Activated T-helper 1 cell treated with anti-CD3 and anti-CD28 coated beads, Interleukin-12 subunit alpha, Interleukin-12 subunit beta, Interleukin-2, Interleukin-4 antibody, amounts not matched to agents 30 ng/mL and 10 ng/mL and 1 ng/mL, durations not matched to agents 14 hours and 24 hours and 36 hours (primary cell): ENCODE measurements at regions of chr1 and their contacts with region 1.

Region 1: DNA sequence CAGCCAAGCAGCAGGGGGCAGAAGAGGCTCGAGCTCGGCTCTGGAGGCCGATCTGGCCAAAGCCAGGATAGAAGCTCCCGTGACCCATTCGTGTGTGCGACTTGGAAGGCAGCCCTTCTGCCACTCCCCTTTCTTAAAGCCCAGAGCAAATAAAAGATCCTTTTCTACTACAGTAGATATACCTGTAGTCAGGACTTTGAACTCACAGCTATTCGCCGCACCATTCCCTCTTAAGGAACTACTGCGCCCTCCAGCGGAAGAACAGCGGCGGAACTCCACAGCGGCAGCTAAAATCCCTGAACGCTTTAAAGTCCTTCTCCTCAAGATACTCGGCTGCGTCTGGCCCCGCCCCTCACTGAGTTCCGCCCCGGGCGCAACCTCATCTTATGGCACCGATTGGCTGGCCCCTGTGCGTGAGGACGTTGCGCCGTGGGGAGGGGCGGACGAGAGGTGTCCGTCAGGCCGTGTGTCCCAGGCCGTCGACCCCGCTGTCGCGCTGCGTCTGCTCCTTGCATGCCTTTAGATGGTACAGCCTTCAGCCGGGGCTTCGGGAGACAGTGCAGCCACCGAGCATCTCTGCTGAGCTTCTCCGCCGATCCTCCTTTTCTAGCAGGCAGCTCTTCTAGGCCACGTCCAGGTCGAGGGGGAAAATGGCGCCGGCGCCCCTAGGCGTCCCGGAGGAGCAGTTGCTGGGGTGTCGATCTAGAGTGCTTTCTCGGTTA is at the start of gene LRIG2:
- DNase-seq: peak; percentile 97
- H3K4me3 Mint-ChIP-seq: peak within 1 kb of the TSS; percentile 98
- H3K27ac Mint-ChIP-seq: peak within 1 kb of the TSS; percentile 86
- H3K4me1 Mint-ChIP-seq: peaks cover 25% of the 10 kb centered on the region
- H3K27me3 Mint-ChIP-seq: no peaks in the 10 kb centered on the region
- total RNA-seq, gene LRIG2: 11.2 and 12.3 TPM in 2 replicates

Region 2: GRCh38 chr1:111755331-111756123 is 1317.4 kb before region 1 on chr1 and contains the start of gene DDX20:
- intact Hi-C with region 1: loop called (anchors 2 kb)
- DNase-seq: peak; percentile 92
- H3K4me3 Mint-ChIP-seq: peak within 1 kb of the TSS; percentile 83
- H3K27ac Mint-ChIP-seq: peak within 1 kb of the TSS; percentile 97
- H3K4me1 Mint-ChIP-seq: peaks cover 35% of the 10 kb centered on the region
- H3K27me3 Mint-ChIP-seq: peaks cover 12% of the 10 kb centered on the region
- total RNA-seq, gene DDX20: 21.5 and 25.2 TPM in 2 replicates

Region 3: DNA sequence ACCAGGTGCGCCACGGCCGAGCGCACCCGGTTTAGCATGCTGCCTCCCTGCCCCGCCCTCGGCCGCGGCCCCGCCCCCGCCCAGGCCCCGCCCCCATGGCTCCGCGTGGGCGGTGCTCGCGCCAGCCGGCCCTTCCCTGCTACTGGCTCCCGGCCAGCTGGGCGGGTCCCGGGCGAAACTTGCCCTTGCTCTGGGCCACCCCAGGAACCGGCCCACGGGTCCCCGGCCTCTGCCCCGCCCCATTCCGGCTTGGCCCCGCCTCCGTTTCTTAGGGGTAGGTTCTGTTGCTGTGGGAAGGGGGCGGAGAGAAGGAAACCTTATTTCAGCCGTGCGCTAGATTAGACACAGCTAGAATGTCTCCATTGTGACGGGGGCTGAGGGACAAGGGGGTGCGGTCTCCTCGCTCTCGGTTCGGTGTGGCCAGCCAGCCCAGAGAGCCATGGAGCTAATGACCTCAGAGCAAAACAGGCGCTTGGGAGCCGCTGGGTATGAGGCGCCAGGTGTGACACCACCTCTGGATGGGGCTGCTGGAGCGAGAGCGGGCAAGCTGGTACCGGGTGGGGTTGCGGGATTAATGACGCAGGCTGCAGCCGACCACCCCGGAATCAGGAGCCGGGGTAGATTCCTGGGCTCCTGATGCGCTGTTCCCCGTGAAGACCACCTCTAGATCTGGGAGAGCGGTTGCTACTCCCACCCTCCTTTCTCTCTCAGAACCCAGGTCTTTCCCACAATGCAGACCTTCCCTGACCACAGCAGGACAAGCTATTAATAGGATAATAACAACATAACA is 357.5 kb before region 1 on chr1 and contains the start of gene PPM1J:
- intact Hi-C with region 1: loop called (anchors 2 kb)
- DNase-seq: peak; percentile 99
- H3K4me3 Mint-ChIP-seq: peak within 1 kb of the TSS; percentile 86
- H3K27ac Mint-ChIP-seq: peak within 1 kb of the TSS; percentile 27
- H3K4me1 Mint-ChIP-seq: peaks cover 41% of the 10 kb centered on the region
- H3K27me3 Mint-ChIP-seq: peaks cover 29% of the 10 kb centered on the region
- total RNA-seq, gene PPM1J: 0.60 and 1.1 TPM in 2 replicates

Region 4: GRCh38 chr1:112904071-112904830 is 168.7 kb before region 1 on chr1:
- intact Hi-C with region 1: loop called (anchors 2 kb)
- DNase-seq: peak; percentile 36
- H3K4me3 Mint-ChIP-seq: peak overlapping the region; percentile 2
- H3K27ac Mint-ChIP-seq: peak overlapping the region; percentile 73
- H3K4me1 Mint-ChIP-seq: peaks cover 32% of the 10 kb centered on the region
- H3K27me3 Mint-ChIP-seq: peaks cover 2% of the 10 kb centered on the region

Region 5: GRCh38 chr1:113031171-113031933 is 41.6 kb before region 1 on chr1:
- intact Hi-C with region 1: no loop called
- DNase-seq: no peak
- H3K4me3 Mint-ChIP-seq: no peak overlapping the region
- H3K27ac Mint-ChIP-seq: no peak overlapping the region
- H3K4me1 Mint-ChIP-seq: no peaks in the 10 kb centered on the region
- H3K27me3 Mint-ChIP-seq: no peaks in the 10 kb centered on the region

Region 6: DNA sequence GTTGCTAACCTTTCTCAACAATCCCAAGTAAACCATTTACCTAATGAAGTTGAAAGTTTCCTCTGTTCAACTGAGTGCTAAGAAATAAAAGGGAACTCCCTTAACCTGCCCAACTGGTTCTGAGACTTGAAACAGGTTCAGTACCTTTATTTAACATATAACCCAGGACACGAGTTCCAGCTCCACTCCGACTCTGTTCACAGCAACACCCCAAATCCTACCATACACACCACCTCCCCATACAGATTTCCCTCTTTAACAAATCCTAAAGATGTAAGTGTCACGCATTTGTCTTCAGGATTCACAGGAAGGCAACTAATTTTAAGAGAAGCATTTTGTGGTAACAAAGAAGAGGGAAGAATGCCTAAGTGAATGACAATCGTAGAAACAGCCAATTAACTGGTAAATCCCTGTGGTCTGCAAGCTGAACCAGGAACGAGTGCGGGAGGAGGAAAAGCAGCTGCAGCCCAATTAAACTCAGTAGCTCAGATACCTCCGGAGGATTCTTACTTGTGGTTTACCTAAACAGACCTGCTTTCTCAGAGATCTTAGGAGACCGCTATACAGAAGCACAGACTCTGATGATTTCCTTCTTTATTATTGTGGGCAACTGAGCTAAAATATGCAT is 182.9 kb after region 1 on chr1:
- intact Hi-C with region 1: no loop called
- DNase-seq: no peak
- H3K4me3 Mint-ChIP-seq: no peak overlapping the region
- H3K27ac Mint-ChIP-seq: no peak overlapping the region
- H3K4me1 Mint-ChIP-seq: no peaks in the 10 kb centered on the region
- H3K27me3 Mint-ChIP-seq: peaks cover 2% of the 10 kb centered on the region

Region 7: GRCh38 chr1:113415310-113416070 is 342.6 kb after region 1 on chr1:
- intact Hi-C with region 1: loop called (anchors 5 kb)
- DNase-seq: no peak
- H3K4me3 Mint-ChIP-seq: no peak overlapping the region
- H3K27ac Mint-ChIP-seq: no peak overlapping the region
- H3K4me1 Mint-ChIP-seq: no peaks in the 10 kb centered on the region
- H3K27me3 Mint-ChIP-seq: peaks cover 2% of the 10 kb centered on the region

Region 8: GRCh38 chr1:113811888-113812660 is 739.2 kb after region 1 on chr1 and contains the start of gene RSBN1:
- intact Hi-C with region 1: loop called (anchors 2 kb)
- DNase-seq: peak; percentile 99
- H3K4me3 Mint-ChIP-seq: peak within 1 kb of the TSS; percentile 96
- H3K27ac Mint-ChIP-seq: peak within 1 kb of the TSS; percentile 96
- H3K4me1 Mint-ChIP-seq: peaks cover 34% of the 10 kb centered on the region
- H3K27me3 Mint-ChIP-seq: no peaks in the 10 kb centered on the region
- total RNA-seq, gene RSBN1: 18.4 and 19.5 TPM in 2 replicates

Region 9: GRCh38 chr1:114581335-114582287 is 1508.7 kb after region 1 on chr1 and contains the start of gene BCAS2:
- intact Hi-C with region 1: loop called (anchors 10 kb)
- DNase-seq: peak; percentile 94
- H3K4me3 Mint-ChIP-seq: peak within 1 kb of the TSS; percentile 91
- H3K27ac Mint-ChIP-seq: peak within 1 kb of the TSS; percentile 92
- H3K4me1 Mint-ChIP-seq: peaks cover 34% of the 10 kb centered on the region
- H3K27me3 Mint-ChIP-seq: peaks cover 5% of the 10 kb centered on the region
- total RNA-seq, gene BCAS2: 61.9 and 63.0 TPM in 2 replicates